Naive thymus-derived CD4-positive, alpha-beta T cell (primary cell): ENCODE measurements at regions of chr2 and their contacts with region 1.

Region 1: DNA sequence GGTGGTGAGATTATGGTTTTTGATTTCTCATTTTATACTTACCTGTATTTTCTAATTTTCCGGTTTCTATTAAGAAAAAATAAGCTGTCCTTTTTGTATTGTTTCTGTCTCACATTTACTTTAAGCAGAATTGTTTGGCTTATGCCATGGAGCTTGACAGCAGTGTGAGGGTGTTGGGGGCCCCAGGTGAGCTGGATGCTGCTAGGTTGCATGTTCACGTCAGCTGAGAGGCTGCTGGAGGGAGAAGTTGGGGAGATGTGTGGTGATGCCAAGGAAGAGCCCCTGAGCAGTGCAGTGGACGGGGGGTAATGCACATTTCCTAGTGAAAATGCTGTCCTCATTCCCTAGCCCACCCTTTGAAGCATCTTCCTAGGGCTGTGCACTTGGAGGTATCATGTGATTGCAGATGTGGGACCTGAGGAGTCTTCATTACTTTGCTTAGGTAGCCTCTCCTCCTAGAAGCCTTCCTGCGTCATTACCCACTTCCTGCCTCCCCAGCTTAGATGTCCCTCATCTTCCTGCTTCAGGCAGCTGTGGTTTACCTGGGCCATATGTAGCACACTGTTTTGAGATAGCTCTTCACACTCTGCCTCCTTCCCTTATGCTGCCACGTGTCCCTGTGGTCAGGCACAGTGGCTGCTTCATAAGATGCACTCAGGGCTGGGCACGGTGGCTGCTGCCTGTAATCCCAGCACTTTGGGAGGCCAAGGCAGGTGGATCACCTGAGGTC is 16.2 kb downstream of the ATG16L1 start:
- DNase-seq: peak; percentile 49 to 95 (median 91)
- ATAC-seq: peak; percentile 97
- H3K4me3 ChIP-seq: peak overlapping the region; percentile 40
- H3K4me3 Mint-ChIP-seq: peak overlapping the region; percentile 38 to 84 (median 76)
- H3K27ac ChIP-seq: peak overlapping the region; percentile 79
- H3K27ac Mint-ChIP-seq: peak overlapping the region; percentile 95 to 100 (median 99)
- H3K4me1 ChIP-seq: peaks cover 57 to 62% of the 10 kb centered on the region in 2 donors
- H3K4me1 Mint-ChIP-seq: peaks cover 39 to 81% (median 75%) of the 10 kb centered on the region in 7 donors
- H3K27me3 ChIP-seq: no peaks in the 10 kb centered on the region
- H3K27me3 Mint-ChIP-seq: no peaks in the 10 kb centered on the region

Region 2: GRCh38 chr2:231706731-231707624 is 1560.7 kb before region 1 on chr2:
- CTCF ChIA-PET with region 1: no interaction called
- POLR2A ChIA-PET with region 1: interaction called, 3 read pairs
- intact Hi-C with region 1: loop called in 1 of 2 experiments (anchors 5 kb)
- DNase-seq: peak; percentile 96 to 99 (median 97)
- ATAC-seq: peak; percentile 62
- H3K4me3 ChIP-seq: peak overlapping the region; percentile 78
- H3K4me3 Mint-ChIP-seq: peak overlapping the region; percentile 95 to 99 (median 97)
- H3K27ac ChIP-seq: peak overlapping the region; percentile 100
- H3K27ac Mint-ChIP-seq: peak overlapping the region; percentile 100
- H3K4me1 ChIP-seq: peaks cover 19 to 21% of the 10 kb centered on the region in 2 donors
- H3K4me1 Mint-ChIP-seq: peaks cover 11 to 34% (median 23%) of the 10 kb centered on the region in 7 donors
- H3K27me3 ChIP-seq: no peaks in the 10 kb centered on the region
- H3K27me3 Mint-ChIP-seq: peaks cover 0 to 6% (median 0%) of the 10 kb centered on the region in 5 donors

Region 3: GRCh38 chr2:232697100-232697865 is 570.4 kb before region 1 on chr2 and contains the start of gene GIGYF2:
- CTCF ChIA-PET with region 1: no interaction called
- POLR2A ChIA-PET with region 1: no interaction called
- intact Hi-C with region 1: loop called (anchors 1 to 5 kb)
- DNase-seq: peak; percentile 73 to 94 (median 84)
- ATAC-seq: peak; percentile 95
- H3K4me3 ChIP-seq: peak within 1 kb of the TSS; percentile 94
- H3K4me3 Mint-ChIP-seq: peak within 1 kb of the TSS; percentile 88 to 98 (median 93)
- H3K27ac ChIP-seq: peak within 1 kb of the TSS; percentile 96
- H3K27ac Mint-ChIP-seq: peak within 1 kb of the TSS; percentile 82 to 96 (median 87)
- H3K4me1 ChIP-seq: peaks cover 35 to 37% of the 10 kb centered on the region in 2 donors
- H3K4me1 Mint-ChIP-seq: peaks cover 22 to 40% (median 35%) of the 10 kb centered on the region in 7 donors
- H3K27me3 ChIP-seq: no peaks in the 10 kb centered on the region
- H3K27me3 Mint-ChIP-seq: peaks cover 0 to 10% (median 0%) of the 10 kb centered on the region in 5 donors
- total RNA-seq, gene GIGYF2: 70.7 to 82.8 (median 79.8) TPM

Region 4: DNA sequence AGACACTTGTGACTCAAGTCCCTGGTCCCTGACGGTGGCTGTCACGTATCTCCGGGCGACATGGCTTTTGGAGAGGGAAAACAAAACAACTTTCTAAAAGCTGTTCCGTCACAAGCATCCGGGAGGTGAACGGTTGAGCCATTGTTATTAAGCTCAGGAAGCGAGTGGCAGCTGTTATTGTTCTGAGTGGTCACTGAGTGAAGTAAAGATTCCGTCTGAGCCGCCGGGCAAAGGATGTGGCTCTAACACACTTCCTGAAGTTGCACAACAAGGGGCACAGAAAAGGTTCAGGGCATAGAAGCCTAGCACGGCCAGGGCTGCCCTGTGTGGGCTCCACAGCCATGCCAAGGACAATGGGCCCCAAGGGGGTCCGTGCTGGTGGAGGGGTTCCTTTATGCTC is 183.2 kb before region 1 on chr2:
- CTCF ChIA-PET with region 1: no interaction called
- POLR2A ChIA-PET with region 1: interaction called, 6 read pairs
- intact Hi-C with region 1: loop called in 1 of 2 experiments (anchors 5 kb)
- DNase-seq: peak in 7 of 9 donors; percentile 32 to 66 (median 55)
- ATAC-seq: peak; percentile 64
- H3K4me3 ChIP-seq: peak overlapping the region; percentile 27
- H3K4me3 Mint-ChIP-seq: peak overlapping the region; percentile 79 to 86 (median 82)
- H3K27ac ChIP-seq: peak overlapping the region; percentile 57
- H3K27ac Mint-ChIP-seq: peak overlapping the region in 8 of 9 donors; percentile 88 to 98 (median 93)
- H3K4me1 ChIP-seq: peaks cover 64 to 82% of the 10 kb centered on the region in 2 donors
- H3K4me1 Mint-ChIP-seq: peaks cover 74 to 93% (median 88%) of the 10 kb centered on the region in 7 donors
- H3K27me3 ChIP-seq: no peaks in the 10 kb centered on the region
- H3K27me3 Mint-ChIP-seq: no peaks in the 10 kb centered on the region

Region 5: DNA sequence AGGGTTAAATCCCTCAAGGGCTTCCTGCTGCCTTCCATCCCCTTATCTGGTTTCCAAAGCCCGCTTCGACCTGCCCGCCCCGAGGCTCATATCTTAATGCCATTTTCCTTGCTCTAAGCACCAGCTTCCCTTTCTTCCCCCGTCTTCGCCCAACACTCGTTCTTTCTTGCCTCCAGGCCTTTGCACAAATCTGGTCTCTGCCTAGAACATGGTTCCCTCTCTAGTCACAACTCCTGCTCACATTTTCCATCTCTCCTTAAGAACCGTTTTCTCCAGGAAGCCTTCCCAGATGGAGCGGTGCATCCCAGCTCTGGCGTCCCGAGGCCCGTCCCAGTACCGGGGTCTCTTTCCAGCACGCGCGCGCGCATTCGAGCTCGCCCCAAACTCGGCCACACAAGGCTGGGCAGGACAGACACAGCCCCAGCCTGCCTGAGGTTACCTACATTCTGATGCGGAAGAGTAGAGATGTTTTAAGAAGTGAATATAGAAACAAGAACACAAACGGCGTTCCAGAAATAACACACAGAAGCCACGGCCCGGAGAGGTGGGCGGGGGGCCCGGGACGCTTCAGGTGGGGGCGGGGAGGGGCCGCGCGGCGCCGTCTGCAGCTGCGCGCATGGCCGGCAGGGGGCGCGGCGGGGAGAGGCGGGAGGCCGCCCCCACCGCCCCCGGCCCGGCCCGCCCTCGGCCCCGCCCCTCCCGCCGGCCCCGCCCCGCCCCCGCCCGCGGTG is 86.3 kb after region 1 on chr2 and contains the start of gene DGKD:
- CTCF ChIA-PET with region 1: interaction called, 3 read pairs
- POLR2A ChIA-PET with region 1: interaction called, 10 read pairs
- intact Hi-C with region 1: loop called (anchors 1 to 2 kb)
- DNase-seq: peak; percentile 42 to 81 (median 69)
- ATAC-seq: peak; percentile 96
- H3K4me3 ChIP-seq: peak within 1 kb of the TSS; percentile 83
- H3K4me3 Mint-ChIP-seq: peak within 1 kb of the TSS; percentile 92 to 98 (median 94)
- H3K27ac ChIP-seq: peak within 1 kb of the TSS; percentile 72
- H3K27ac Mint-ChIP-seq: peak within 1 kb of the TSS; percentile 86 to 96 (median 92)
- H3K4me1 ChIP-seq: peaks cover 36 to 42% of the 10 kb centered on the region in 2 donors
- H3K4me1 Mint-ChIP-seq: peaks cover 57 to 74% (median 67%) of the 10 kb centered on the region in 7 donors
- H3K27me3 ChIP-seq: no peaks in the 10 kb centered on the region
- H3K27me3 Mint-ChIP-seq: no peaks in the 10 kb centered on the region
- total RNA-seq, gene DGKD: 61.6 to 252 (median 213) TPM

Region 6: GRCh38 chr2:233443468-233444183 is 175.9 kb after region 1 on chr2:
- CTCF ChIA-PET with region 1: interaction called, 4 read pairs
- POLR2A ChIA-PET with region 1: no interaction called
- intact Hi-C with region 1: loop called (anchors 1 to 2 kb)
- DNase-seq: peak; percentile 60 to 89 (median 82)
- ATAC-seq: peak; percentile 96
- H3K4me3 ChIP-seq: no peak overlapping the region
- H3K4me3 Mint-ChIP-seq: peak overlapping the region in 3 of 10 donors; percentile 1 to 51 (median 19)
- H3K27ac ChIP-seq: peak overlapping the region; percentile 30
- H3K27ac Mint-ChIP-seq: peak overlapping the region; percentile 65 to 88 (median 80)
- H3K4me1 ChIP-seq: peaks cover 0 to 3% of the 10 kb centered on the region in 2 donors
- H3K4me1 Mint-ChIP-seq: peaks cover 16 to 42% (median 34%) of the 10 kb centered on the region in 7 donors
- H3K27me3 ChIP-seq: no peaks in the 10 kb centered on the region
- H3K27me3 Mint-ChIP-seq: no peaks in the 10 kb centered on the region